MCF 10A (cell line): ENCODE measurements at regions of chr10 and their contacts with region 1.

Region 1: GRCh38 chr10:84205049-84205852 is 10.9 kb downstream of the CDHR1 start:
- DNase-seq: peak; percentile 67
- H3K4me3 Mint-ChIP-seq: no peak overlapping the region
- H3K27ac Mint-ChIP-seq: no peak overlapping the region
- H3K4me1 Mint-ChIP-seq: no peaks in the 10 kb centered on the region
- H3K27me3 Mint-ChIP-seq: peaks cover 43% of the 10 kb centered on the region
- CTCF ChIP-seq: peak; percentile 80

Region 2: DNA sequence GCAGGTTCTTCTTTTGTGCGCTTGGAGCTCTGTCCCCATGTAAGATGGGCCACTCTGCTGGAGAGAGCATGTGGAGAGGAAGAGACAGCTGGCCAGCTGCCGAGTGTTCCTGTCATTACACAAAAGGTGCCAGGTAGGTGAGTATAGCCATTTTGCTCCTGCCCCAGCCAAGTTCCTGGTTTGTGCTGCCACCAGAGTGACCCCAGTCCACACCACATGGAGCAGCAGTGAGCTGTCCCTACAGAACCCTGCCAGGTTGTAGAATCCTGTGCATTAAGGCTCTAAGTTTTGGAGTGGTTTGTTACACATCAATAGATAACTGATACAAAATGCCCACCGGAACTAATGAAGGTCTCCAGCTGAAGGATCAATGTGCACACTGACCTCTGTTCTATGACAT is 150.5 kb before region 1 on chr10:
- CTCF ChIA-PET with region 1: no interaction called
- POLR2A ChIA-PET with region 1: no interaction called
- intact Hi-C with region 1: loop called (anchors 10 kb)
- DNase-seq: no peak
- H3K4me3 Mint-ChIP-seq: no peak overlapping the region
- H3K27ac Mint-ChIP-seq: no peak overlapping the region
- H3K4me1 Mint-ChIP-seq: no peaks in the 10 kb centered on the region
- H3K27me3 Mint-ChIP-seq: no peaks in the 10 kb centered on the region
- CTCF ChIP-seq: no peak

Region 3: GRCh38 chr10:84152769-84153168 is 52.5 kb before region 1 on chr10:
- CTCF ChIA-PET with region 1: interaction called, 210 read pairs
- POLR2A ChIA-PET with region 1: interaction called, 5 read pairs
- intact Hi-C with region 1: loop called (anchors 1 kb)
- DNase-seq: no peak
- H3K4me3 Mint-ChIP-seq: no peak overlapping the region
- H3K27ac Mint-ChIP-seq: no peak overlapping the region
- H3K4me1 Mint-ChIP-seq: no peaks in the 10 kb centered on the region
- H3K27me3 Mint-ChIP-seq: no peaks in the 10 kb centered on the region
- CTCF ChIP-seq: no peak

Region 4: DNA sequence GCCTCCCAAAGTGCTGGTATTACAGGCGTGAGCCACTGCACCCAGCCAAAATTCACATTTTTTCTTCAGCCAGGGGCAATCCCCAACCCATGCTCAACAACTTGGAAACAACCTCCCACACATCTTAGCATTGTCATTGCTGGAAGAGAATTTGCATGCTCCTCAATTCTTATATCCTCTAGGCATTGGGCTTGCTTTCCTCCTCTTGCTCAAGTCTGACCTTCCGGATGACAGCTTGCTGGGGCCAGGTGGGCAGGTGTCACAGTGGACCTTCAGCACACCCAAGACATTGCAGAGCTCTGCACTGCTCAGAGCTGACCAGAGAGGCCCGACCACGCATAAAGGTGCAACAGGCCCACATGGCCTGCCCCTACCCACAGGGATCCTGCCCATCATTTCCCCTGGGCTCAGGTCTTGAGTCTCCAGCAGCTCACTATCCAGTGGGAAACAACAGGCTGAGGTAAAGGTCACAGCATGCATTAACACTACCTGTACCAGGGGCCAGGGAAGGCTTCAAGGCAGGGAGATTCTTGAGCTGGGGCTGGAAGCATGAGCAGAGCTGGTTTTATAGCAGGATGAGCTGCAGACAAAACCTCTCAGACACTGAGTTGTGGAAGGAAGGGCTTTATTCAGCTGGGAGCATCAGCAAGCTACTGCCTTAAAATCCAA is 38.5 kb before region 1 on chr10:
- CTCF ChIA-PET with region 1: interaction called, 139 read pairs
- POLR2A ChIA-PET with region 1: interaction called, 3 read pairs
- intact Hi-C with region 1: no loop called
- DNase-seq: no peak
- H3K4me3 Mint-ChIP-seq: no peak overlapping the region
- H3K27ac Mint-ChIP-seq: no peak overlapping the region
- H3K4me1 Mint-ChIP-seq: peaks cover 6% of the 10 kb centered on the region
- H3K27me3 Mint-ChIP-seq: no peaks in the 10 kb centered on the region
- CTCF ChIP-seq: no peak

Region 5: GRCh38 chr10:84194424-84195040 is 10.7 kb before region 1 on chr10 and contains the start of gene CDHR1:
- CTCF ChIA-PET with region 1: interaction called, 58 read pairs
- POLR2A ChIA-PET with region 1: no interaction called
- intact Hi-C with region 1: no loop called
- DNase-seq: no peak
- H3K4me3 Mint-ChIP-seq: no peak within 1 kb of the TSS
- H3K27ac Mint-ChIP-seq: no peak within 1 kb of the TSS
- H3K4me1 Mint-ChIP-seq: peaks cover 7% of the 10 kb centered on the region
- H3K27me3 Mint-ChIP-seq: peaks cover 35% of the 10 kb centered on the region
- CTCF ChIP-seq: no peak
- total RNA-seq, gene CDHR1: not detected in 2 replicates

Region 6: DNA sequence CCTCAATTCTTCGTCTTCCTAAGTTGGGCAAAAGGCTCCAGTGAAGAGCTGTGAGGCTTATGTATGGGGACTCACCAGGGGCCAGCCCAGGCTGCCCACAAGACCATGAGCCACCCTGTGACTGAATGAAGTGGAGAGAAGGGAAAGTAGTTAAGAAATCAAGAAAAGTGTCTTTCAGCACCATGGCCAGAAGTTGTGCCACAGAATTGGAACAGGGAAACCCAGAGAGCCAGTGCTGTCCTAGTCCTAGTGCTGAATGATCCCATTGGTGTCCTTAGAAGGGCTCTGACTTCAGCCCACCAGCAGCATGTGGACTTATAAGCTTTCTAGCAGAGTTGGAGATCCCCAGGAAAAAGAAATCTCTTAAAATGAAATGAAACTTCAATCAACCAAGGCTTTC is 86.1 kb after region 1 on chr10:
- CTCF ChIA-PET with region 1: no interaction called
- POLR2A ChIA-PET with region 1: no interaction called
- intact Hi-C with region 1: no loop called
- DNase-seq: peak; percentile 64
- H3K4me3 Mint-ChIP-seq: no peak overlapping the region
- H3K27ac Mint-ChIP-seq: no peak overlapping the region
- H3K4me1 Mint-ChIP-seq: no peaks in the 10 kb centered on the region
- H3K27me3 Mint-ChIP-seq: peaks cover 34% of the 10 kb centered on the region
- CTCF ChIP-seq: no peak